ENCODE measurements at regions of chr12 and their contacts with region 1.

Region 1: DNA sequence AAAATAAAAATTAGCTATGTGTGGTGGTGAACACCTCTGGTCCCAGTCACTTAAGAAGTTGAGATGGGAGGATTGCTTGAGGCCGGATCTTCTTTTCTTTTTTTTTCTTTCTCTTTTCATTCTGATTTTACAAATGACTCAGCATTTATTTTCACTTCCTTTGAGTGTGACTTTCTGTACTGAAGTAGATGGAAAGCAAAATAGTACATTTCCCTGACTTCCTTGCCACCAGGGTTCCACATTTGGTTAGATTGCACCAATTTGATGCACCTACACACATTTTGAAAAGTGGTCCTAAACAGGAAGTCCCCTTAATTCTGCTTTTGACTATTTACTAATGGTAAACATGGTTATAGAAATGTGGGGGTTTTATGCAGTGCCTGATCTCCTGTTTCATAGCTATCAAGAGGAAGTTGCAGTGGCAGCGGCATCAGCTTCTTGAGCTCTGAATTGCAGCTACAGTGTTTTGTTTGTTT is 13.0 kb upstream of the LEMD3 start:
- DNase-seq: peak; percentile 71
- H3K4me3 Mint-ChIP-seq: peak overlapping the region; percentile 49
- H3K27ac Mint-ChIP-seq: peak overlapping the region; percentile 78
- H3K4me1 Mint-ChIP-seq: peaks cover 14% of the 10 kb centered on the region
- H3K27me3 Mint-ChIP-seq: peaks cover 15% of the 10 kb centered on the region

Region 2: GRCh38 chr12:65209655-65210043 is 53.2 kb after region 1 on chr12:
- intact Hi-C with region 1: loop called (anchors 5 kb)
- DNase-seq: no peak
- H3K4me3 Mint-ChIP-seq: peak overlapping the region; percentile 80
- H3K27ac Mint-ChIP-seq: peak overlapping the region; percentile 92
- H3K4me1 Mint-ChIP-seq: peaks cover 42% of the 10 kb centered on the region
- H3K27me3 Mint-ChIP-seq: no peaks in the 10 kb centered on the region

Region 3: DNA sequence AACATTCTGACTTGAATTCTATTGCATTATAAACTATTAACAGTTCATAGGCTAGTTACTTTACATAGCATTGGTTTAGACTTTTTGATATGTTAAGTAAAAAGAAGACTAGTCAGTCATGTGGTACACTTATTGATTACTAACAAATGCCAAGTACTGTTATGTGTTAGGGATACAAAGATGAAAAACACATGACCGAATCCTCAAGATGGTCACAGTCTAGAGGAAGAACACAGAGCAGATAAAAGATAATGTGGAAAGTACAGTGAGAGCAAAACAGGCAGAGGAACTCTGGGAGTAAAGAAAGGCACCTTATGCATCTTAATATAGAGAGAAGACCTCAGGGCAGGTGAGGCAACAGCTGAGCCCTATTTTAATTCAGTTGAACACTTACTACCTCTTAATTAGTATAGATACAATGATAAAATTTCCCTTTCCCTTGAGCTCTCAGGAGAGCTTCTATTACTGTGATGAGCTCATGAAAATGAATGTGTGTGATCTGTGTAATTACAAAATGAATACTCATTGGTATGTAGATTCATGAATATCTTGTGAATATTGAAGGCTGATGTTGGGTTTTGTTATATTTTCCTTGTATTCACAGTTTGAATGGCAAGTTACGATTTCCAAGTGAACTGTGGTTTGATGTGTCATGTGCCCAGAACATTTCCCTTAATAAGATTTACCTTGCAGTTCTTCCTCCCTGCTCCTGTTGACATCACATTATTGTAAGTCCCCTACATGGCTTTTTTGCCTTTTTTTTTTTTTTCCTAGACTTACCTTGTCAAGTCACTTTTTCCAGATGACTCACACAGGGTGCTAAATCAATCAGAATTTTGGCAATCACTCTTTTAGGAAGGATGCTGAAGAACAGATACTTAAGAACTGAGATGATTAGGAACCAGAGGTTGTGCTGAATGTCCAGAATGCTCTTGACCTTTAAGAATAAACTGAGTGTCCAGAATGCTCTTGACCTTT is 92.5 kb after region 1 on chr12:
- intact Hi-C with region 1: loop called (anchors 1 kb)
- DNase-seq: no peak
- H3K4me3 Mint-ChIP-seq: no peak overlapping the region
- H3K27ac Mint-ChIP-seq: peak overlapping the region; percentile 90
- H3K4me1 Mint-ChIP-seq: peaks cover 16% of the 10 kb centered on the region
- H3K27me3 Mint-ChIP-seq: peaks cover 3% of the 10 kb centered on the region

Region 4: DNA sequence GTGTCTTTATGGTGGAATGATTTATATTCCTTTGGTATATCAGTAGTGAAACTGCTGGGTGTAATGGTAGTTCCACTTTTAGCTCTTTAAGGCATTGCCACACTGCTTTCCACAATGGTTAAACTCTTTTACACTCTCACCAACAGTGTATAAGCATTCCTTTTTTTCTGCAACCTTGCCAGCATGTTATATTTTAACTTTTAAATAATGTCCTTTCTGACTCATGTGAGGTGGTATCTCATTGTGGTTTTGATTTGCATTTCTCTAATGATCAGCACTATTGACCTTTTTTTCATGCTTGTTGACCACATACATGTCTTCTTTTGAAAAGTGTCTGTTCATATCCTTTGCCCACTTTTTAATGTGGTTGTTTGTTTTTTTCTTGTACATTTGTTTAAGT is 264.5 kb after region 1 on chr12:
- intact Hi-C with region 1: no loop called
- DNase-seq: no peak
- H3K4me3 Mint-ChIP-seq: no peak overlapping the region
- H3K27ac Mint-ChIP-seq: no peak overlapping the region
- H3K4me1 Mint-ChIP-seq: no peaks in the 10 kb centered on the region
- H3K27me3 Mint-ChIP-seq: no peaks in the 10 kb centered on the region

Measured in activated CD4-positive, alpha-beta T cell treated with anti-CD3 and anti-CD28 coated beads, Interleukin-2, amount 10 ng/mL, durations not matched to agents 24 days and 14 days (primary cell).